ENCODE measurements at regions of chr2 and their contacts with region 1.

Region 1: DNA sequence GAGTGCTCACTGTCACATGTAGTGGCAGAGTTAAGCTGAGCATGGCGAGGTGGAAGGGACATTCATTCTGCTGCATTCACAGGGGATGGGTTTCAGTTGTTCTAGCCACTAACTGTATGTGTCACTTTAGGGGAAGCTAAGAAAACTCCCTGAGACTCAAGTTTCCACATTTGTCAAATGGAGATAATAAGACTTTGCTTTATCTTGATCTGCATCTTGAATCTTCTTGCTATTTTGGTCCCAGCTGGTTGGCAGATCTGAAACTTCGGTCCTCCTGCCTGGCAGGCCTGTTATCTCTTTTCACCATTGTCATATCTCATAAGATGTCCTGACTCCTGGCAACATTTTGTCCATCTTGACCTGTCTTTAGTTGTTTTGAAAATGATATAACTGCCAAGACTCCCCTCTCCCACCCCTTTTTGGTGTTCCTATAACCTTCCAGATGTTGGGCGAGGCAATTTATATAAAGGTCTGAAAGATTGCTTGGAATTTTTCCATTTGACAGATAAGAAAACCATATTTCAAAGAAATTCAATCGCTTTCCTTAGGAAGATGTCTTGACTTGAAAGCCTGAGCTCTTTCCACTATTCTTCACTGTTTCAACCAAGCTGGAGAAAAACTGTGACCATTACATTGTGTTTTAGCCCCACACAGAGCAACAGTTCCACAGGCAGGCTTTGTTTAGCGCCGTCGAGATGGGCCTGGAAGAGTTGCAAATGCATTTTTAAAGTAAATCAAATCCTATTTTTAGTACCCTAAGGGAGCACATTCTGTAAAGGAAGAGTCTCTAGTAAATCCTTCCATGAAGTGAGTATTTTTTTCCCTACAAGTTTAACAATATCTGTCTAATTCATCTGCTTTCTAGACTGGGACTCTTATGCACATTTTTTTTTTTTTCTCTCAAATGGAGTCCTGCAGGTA is 33.4 kb downstream of the MYCN start:
- DNase-seq: no peak
- ATAC-seq: no peak
- H3K4me3 ChIP-seq: no peak overlapping the region
- H3K4me3 Mint-ChIP-seq: no peak overlapping the region
- H3K27ac ChIP-seq: no peak overlapping the region
- H3K27ac Mint-ChIP-seq: no peak overlapping the region
- H3K4me1 ChIP-seq: no peaks in the 10 kb centered on the region
- H3K4me1 Mint-ChIP-seq: peaks cover 5 to 15% of the 10 kb centered on the region in 2 donors
- H3K27me3 ChIP-seq: no peaks in the 10 kb centered on the region
- H3K27me3 Mint-ChIP-seq: no peaks in the 10 kb centered on the region
- CTCF ChIP-seq: no peak

Region 2: GRCh38 chr2:14396533-14397083 is 1577.1 kb before region 1 on chr2:
- intact Hi-C with region 1: no loop called
- DNase-seq: no peak
- ATAC-seq: no peak
- H3K4me3 ChIP-seq: no peak overlapping the region
- H3K4me3 Mint-ChIP-seq: no peak overlapping the region
- H3K27ac ChIP-seq: no peak overlapping the region
- H3K27ac Mint-ChIP-seq: no peak overlapping the region
- H3K4me1 ChIP-seq: no peaks in the 10 kb centered on the region
- H3K4me1 Mint-ChIP-seq: no peaks in the 10 kb centered on the region
- H3K27me3 ChIP-seq: no peaks in the 10 kb centered on the region
- H3K27me3 Mint-ChIP-seq: no peaks in the 10 kb centered on the region
- CTCF ChIP-seq: no peak

Region 3: DNA sequence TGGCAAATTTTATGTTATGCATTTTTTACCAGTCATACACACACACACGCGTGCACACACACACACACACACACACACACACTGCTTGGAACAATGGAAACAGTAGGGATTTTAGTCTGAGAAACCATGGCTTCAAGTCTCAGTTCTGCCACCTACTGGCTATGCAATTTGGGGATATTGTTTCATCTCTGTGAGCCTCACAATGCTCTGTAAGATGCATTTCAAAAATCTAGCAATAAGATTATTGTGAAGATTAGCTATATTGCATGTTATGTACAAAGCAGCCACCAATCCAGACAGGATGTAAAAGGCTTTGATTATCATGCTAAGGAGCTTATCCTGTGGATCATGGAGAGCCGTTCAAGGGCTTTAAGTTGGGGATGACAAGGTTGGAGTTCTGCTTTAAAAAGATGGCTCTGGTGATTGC is 814.0 kb before region 1 on chr2:
- intact Hi-C with region 1: loop called (anchors 10 kb)
- DNase-seq: peak in 1 of 2 donors; percentile 47
- ATAC-seq: no peak
- H3K4me3 ChIP-seq: no peak overlapping the region
- H3K4me3 Mint-ChIP-seq: no peak overlapping the region
- H3K27ac ChIP-seq: no peak overlapping the region
- H3K27ac Mint-ChIP-seq: no peak overlapping the region
- H3K4me1 ChIP-seq: no peaks in the 10 kb centered on the region
- H3K4me1 Mint-ChIP-seq: no peaks in the 10 kb centered on the region
- H3K27me3 ChIP-seq: no peaks in the 10 kb centered on the region
- H3K27me3 Mint-ChIP-seq: no peaks in the 10 kb centered on the region
- CTCF ChIP-seq: no peak

Measured in natural killer cell (primary cell).